ENCODE measurements at regions of chr11 and their contacts with region 1.

Region 1: GRCh38 chr11:35138943-35139721 is at the start of gene CD44:
- DNase-seq: peak; percentile 78 to 93 (median 83)
- H3K4me3 ChIP-seq: peak within 1 kb of the TSS; percentile 84 to 99
- H3K4me3 Mint-ChIP-seq: peak within 1 kb of the TSS; percentile 95 to 99 (median 98)
- H3K27ac ChIP-seq: peak within 1 kb of the TSS; percentile 98
- H3K27ac Mint-ChIP-seq: peak within 1 kb of the TSS; percentile 93 to 99 (median 98)
- H3K4me1 ChIP-seq: peaks cover 42% of the 10 kb centered on the region
- H3K4me1 Mint-ChIP-seq: peaks cover 36 to 64% (median 44%) of the 10 kb centered on the region in 4 donors
- H3K27me3 ChIP-seq: no peaks in the 10 kb centered on the region
- H3K27me3 Mint-ChIP-seq: no peaks in the 10 kb centered on the region
- total RNA-seq, gene CD44: 808 to 809 TPM

Region 2: GRCh38 chr11:34886609-34887008 is 252.5 kb before region 1 on chr11:
- CTCF ChIA-PET with region 1: no interaction called
- POLR2A ChIA-PET with region 1: no interaction called
- intact Hi-C with region 1: no loop called
- DNase-seq: no peak
- H3K4me3 ChIP-seq: no peak overlapping the region
- H3K4me3 Mint-ChIP-seq: no peak overlapping the region
- H3K27ac ChIP-seq: no peak overlapping the region
- H3K27ac Mint-ChIP-seq: no peak overlapping the region
- H3K4me1 ChIP-seq: no peaks in the 10 kb centered on the region
- H3K4me1 Mint-ChIP-seq: no peaks in the 10 kb centered on the region
- H3K27me3 ChIP-seq: no peaks in the 10 kb centered on the region
- H3K27me3 Mint-ChIP-seq: no peaks in the 10 kb centered on the region

Region 3: GRCh38 chr11:35006389-35007128 is 132.6 kb before region 1 on chr11:
- CTCF ChIA-PET with region 1: interaction called, 17 read pairs
- POLR2A ChIA-PET with region 1: interaction called, 25 read pairs
- intact Hi-C with region 1: no loop called
- DNase-seq: peak in 3 of 5 donors; percentile 11 to 48 (median 16)
- H3K4me3 ChIP-seq: peak overlapping the region in 1 of 2 donors; percentile 10
- H3K4me3 Mint-ChIP-seq: peak overlapping the region in 7 of 8 donors; percentile 7 to 79 (median 47)
- H3K27ac ChIP-seq: no peak overlapping the region
- H3K27ac Mint-ChIP-seq: peak overlapping the region; percentile 72 to 88 (median 81)
- H3K4me1 ChIP-seq: peaks cover 32% of the 10 kb centered on the region
- H3K4me1 Mint-ChIP-seq: peaks cover 23 to 62% (median 45%) of the 10 kb centered on the region in 4 donors
- H3K27me3 ChIP-seq: no peaks in the 10 kb centered on the region
- H3K27me3 Mint-ChIP-seq: no peaks in the 10 kb centered on the region

Region 4: GRCh38 chr11:35040221-35040942 is 98.8 kb before region 1 on chr11:
- CTCF ChIA-PET with region 1: interaction called, 19 read pairs
- POLR2A ChIA-PET with region 1: interaction called, 211 read pairs
- intact Hi-C with region 1: loop called (anchors 1 kb)
- DNase-seq: peak; percentile 78 to 93 (median 84)
- H3K4me3 ChIP-seq: peak overlapping the region; percentile 31 to 62
- H3K4me3 Mint-ChIP-seq: peak overlapping the region; percentile 80 to 93 (median 88)
- H3K27ac ChIP-seq: peak overlapping the region; percentile 94
- H3K27ac Mint-ChIP-seq: peak overlapping the region; percentile 96 to 99 (median 98)
- H3K4me1 ChIP-seq: peaks cover 68% of the 10 kb centered on the region
- H3K4me1 Mint-ChIP-seq: peaks cover 38 to 69% (median 54%) of the 10 kb centered on the region in 4 donors
- H3K27me3 ChIP-seq: no peaks in the 10 kb centered on the region
- H3K27me3 Mint-ChIP-seq: no peaks in the 10 kb centered on the region

Region 5: GRCh38 chr11:35082321-35083182 is 56.6 kb before region 1 on chr11:
- CTCF ChIA-PET with region 1: interaction called, 3 read pairs
- POLR2A ChIA-PET with region 1: interaction called, 166 read pairs
- intact Hi-C with region 1: loop called (anchors 1 kb)
- DNase-seq: peak; percentile 89 to 96 (median 93)
- H3K4me3 ChIP-seq: peak overlapping the region; percentile 50 to 57
- H3K4me3 Mint-ChIP-seq: peak overlapping the region; percentile 78 to 90 (median 84)
- H3K27ac ChIP-seq: peak overlapping the region; percentile 97
- H3K27ac Mint-ChIP-seq: peak overlapping the region; percentile 94 to 99 (median 98)
- H3K4me1 ChIP-seq: peaks cover 85% of the 10 kb centered on the region
- H3K4me1 Mint-ChIP-seq: peaks cover 73 to 100% (median 87%) of the 10 kb centered on the region in 4 donors
- H3K27me3 ChIP-seq: no peaks in the 10 kb centered on the region
- H3K27me3 Mint-ChIP-seq: no peaks in the 10 kb centered on the region

Region 6: DNA sequence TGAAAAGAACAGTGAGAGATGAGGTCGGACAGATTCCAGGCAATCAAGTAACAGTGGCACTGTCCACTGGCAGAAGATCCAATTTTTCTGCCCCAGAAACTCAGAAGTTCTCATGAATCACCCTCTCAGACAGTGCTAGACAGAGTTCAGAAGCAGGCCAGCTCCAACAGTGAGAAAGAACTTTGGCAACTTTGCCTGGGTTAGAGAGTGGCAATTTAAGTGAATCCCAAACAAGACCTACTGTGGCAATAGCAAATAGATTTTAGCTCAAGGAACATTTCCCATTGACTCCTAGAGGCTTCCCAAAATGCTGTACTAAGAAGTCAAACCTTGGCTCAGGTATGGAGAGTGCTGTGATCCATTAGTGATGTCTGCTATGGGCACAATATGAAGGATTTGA is 12.1 kb after region 1 on chr11:
- CTCF ChIA-PET with region 1: interaction called, 7 read pairs
- POLR2A ChIA-PET with region 1: interaction called, 1,106 read pairs
- intact Hi-C with region 1: loop called (anchors 1 kb)
- DNase-seq: no peak
- H3K4me3 ChIP-seq: no peak overlapping the region
- H3K4me3 Mint-ChIP-seq: peak overlapping the region in 7 of 8 donors; percentile 31 to 80 (median 54)
- H3K27ac ChIP-seq: peak overlapping the region; percentile 19
- H3K27ac Mint-ChIP-seq: peak overlapping the region; percentile 82 to 100 (median 91)
- H3K4me1 ChIP-seq: peaks cover 100% of the 10 kb centered on the region
- H3K4me1 Mint-ChIP-seq: peaks cover 87 to 100% (median 93%) of the 10 kb centered on the region in 4 donors
- H3K27me3 ChIP-seq: no peaks in the 10 kb centered on the region
- H3K27me3 Mint-ChIP-seq: no peaks in the 10 kb centered on the region

Region 7: DNA sequence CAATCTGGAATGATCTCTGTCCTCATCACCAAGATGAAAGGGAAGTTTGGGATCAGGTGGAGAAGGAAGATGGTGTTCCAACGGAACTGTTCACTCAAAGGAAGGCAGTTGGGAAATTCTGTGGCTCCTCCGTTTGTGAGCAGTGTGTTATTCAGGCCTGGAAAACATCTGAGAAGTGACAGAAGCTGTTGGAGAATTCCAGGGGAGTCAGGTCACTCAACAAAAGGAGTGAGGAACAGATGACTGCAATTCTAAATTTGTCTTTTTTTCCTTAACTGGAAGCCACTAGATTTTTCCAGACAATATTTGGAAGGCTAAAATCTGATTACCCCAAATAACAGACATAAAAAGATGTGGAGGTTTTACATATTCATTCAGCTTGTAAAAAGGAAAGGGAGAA is 107.6 kb after region 1 on chr11:
- CTCF ChIA-PET with region 1: interaction called, 4 read pairs
- POLR2A ChIA-PET with region 1: interaction called, 12 read pairs
- intact Hi-C with region 1: no loop called
- DNase-seq: no peak
- H3K4me3 ChIP-seq: no peak overlapping the region
- H3K4me3 Mint-ChIP-seq: peak overlapping the region in 5 of 8 donors; percentile 18 to 77 (median 67)
- H3K27ac ChIP-seq: peak overlapping the region; percentile 47
- H3K27ac Mint-ChIP-seq: peak overlapping the region; percentile 95 to 99 (median 98)
- H3K4me1 ChIP-seq: peaks cover 72% of the 10 kb centered on the region
- H3K4me1 Mint-ChIP-seq: peaks cover 47 to 78% (median 62%) of the 10 kb centered on the region in 4 donors
- H3K27me3 ChIP-seq: no peaks in the 10 kb centered on the region
- H3K27me3 Mint-ChIP-seq: no peaks in the 10 kb centered on the region

Measured in CD4-positive, alpha-beta memory T cell (primary cell).